ENCODE measurements at regions of chr3 and their contacts with region 1.

Region 1: GRCh38 chr3:8970971-8971589 is 7.8 kb upstream of the RAD18 start:
- DNase-seq: peak; percentile 54
- H3K4me3 Mint-ChIP-seq: no peak overlapping the region
- H3K27ac Mint-ChIP-seq: no peak overlapping the region
- H3K4me1 Mint-ChIP-seq: peaks cover 5% of the 10 kb centered on the region
- H3K27me3 Mint-ChIP-seq: peaks cover 6% of the 10 kb centered on the region

Region 2: GRCh38 chr3:8246070-8246469 is 725.0 kb before region 1 on chr3:
- intact Hi-C with region 1: no loop called
- DNase-seq: no peak
- H3K4me3 Mint-ChIP-seq: no peak overlapping the region
- H3K27ac Mint-ChIP-seq: no peak overlapping the region
- H3K4me1 Mint-ChIP-seq: no peaks in the 10 kb centered on the region
- H3K27me3 Mint-ChIP-seq: no peaks in the 10 kb centered on the region

Region 3: DNA sequence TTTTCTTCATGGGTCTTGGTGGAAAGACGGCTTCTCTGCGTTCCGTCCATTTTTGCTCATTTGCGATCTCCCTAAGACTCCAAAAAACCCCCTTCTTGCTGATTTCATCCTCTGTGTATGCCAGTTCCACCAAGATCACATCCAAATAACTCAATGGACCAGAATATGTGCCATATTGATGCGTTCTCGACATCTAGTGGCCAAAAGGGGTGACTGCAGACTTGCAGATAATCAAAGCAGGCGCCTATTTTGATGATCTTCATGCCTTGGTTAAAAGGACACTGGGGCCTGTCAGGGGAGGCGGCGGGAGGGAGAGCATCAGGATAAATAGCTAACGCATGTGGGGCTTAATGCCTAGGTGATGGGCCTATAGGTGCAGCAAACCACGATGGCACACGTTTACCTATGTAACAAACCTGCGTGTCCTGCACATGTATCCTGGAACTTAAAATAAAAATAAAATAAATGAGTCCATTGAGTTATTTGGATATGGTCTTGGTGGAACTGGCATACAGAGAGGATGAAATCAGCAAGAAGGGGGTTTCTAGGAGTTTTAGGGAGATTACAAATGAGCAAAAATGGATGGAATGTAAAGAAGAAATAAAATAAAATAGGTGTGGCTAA is 96.4 kb after region 1 on chr3:
- intact Hi-C with region 1: loop called (anchors 1 kb)
- DNase-seq: no peak
- H3K4me3 Mint-ChIP-seq: no peak overlapping the region
- H3K27ac Mint-ChIP-seq: no peak overlapping the region
- H3K4me1 Mint-ChIP-seq: no peaks in the 10 kb centered on the region
- H3K27me3 Mint-ChIP-seq: no peaks in the 10 kb centered on the region